ENCODE measurements at regions of chr6 and their contacts with region 1.

Region 1: DNA sequence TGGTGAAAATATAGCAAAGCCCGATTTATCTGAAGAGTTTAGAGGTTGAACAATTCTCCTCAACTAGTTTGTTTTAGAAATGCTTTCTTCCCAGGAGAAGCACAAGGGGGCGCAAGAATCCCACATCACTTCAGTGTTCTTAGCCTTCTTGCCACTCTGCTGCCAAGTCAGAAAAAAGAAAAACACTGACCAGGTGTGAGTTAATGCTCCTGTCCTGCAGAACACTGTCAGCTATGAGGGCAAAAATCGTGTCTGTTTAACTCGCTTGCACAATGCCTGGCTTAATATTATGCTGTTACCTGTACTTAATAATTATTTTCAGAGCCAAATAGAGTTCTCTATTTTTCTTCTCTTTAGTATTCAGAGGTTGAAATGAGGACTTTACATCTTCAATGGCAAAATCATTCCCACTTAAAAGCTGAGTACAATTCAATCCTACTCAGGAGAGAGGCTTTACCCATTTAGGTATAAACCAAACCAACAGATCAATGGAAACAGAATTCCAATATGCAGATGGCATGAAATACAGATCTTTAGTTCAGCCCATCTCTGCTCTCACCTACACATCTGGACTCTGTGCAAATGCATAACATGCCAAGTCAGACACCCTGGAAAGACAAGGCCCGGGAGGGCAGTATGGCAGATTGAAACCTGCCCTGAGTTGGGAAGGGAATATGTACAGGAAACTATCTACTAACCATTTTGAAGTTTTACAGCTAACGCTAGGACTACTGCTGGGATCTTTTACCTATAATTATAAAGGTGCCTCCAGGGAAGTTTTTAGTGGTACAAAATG is 71.4 kb upstream of the TULP1 start:
- DNase-seq: no peak
- ATAC-seq: peak; percentile 69

Region 2: DNA sequence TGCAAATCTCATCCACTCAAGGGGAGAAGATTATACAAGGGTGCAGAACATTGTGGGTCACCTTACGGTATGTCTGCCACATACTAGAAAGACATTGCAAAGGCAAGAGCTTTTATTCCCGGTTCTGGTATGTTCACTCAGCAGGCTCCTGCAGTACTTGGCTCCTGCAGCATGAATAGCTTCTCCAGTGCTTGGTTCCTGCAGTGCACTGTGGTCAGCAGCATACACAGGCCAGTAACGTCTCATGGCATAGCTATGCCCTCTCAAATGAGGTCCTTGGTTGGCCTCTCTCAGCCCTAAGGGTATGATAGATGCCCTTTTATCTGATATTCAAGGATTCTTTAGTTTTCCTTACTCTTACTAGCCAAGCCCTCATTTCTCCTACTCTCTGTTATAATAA is 455.6 kb before region 1 on chr6:
- intact Hi-C with region 1: no loop called
- DNase-seq: no peak
- ATAC-seq: no peak

Region 3: GRCh38 chr6:35391240-35391968 is 192.7 kb before region 1 on chr6:
- intact Hi-C with region 1: no loop called
- DNase-seq: no peak
- ATAC-seq: no peak

Region 4: DNA sequence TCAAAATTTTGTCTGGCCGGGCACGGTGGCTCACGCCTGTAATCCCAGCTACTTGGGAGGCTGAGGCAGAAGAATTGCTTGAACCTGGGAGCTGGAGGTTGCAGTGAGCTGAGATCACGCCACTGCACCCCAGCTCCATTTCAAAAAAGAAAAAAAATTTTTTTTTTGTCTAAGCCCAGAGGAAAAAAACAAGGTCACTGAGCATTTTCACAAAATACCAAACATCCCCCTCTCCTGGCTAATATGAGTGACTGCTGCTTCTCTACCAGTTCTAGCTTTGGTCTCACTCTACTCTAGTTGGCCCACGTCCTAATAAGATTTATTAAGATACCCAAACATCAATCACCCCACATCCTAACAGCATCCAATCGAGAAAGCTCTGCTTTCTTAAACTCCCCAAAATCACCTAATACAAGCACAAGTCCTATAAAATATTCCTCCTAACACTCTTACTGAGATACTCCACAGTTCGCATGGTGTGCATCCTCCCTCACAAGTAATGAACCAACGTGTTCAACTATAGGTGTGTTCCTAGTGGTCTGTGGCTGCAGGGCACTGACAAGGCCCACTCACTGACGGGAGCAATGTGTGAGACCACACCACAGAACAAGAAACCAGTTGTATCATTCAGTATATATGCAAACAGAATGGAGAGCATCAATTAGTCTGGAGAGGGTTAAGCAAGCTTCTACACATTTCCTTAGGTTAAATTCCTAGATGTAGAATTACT is 40.4 kb after region 1 on chr6:
- intact Hi-C with region 1: loop called (anchors 5 kb)
- DNase-seq: no peak
- ATAC-seq: no peak

Region 5: DNA sequence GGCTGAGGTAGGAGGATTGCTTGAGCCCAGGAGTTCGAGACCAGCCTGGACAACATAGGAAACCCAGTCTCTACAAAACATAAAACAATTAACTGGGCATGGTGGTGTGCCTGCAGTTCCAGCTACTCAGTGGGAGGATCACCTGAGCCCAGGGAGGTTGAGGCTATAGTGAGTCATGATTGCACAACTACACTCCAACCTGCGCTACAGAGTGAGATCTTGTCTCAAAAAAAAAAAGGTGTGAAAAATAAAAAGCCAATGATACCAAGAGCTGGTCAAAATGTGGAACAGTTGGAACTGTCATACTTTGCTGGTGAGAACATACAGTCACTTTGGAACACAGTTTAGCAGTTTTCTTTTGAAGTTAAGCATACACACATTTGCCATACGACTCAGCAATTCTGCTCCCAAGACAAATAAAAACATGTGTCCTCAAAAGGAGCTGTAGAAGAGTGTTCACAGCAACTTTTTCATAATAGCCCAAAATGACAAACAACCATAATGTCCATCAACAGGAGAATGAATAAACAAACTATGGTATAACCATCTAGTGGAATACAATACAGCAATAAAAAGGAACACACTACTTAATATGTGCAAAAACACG is 126.3 kb after region 1 on chr6:
- intact Hi-C with region 1: no loop called
- DNase-seq: no peak
- ATAC-seq: peak; percentile 28

Measured in Right ventricle myocardium inferior (tissue), 1 donor.